MCF 10A (cell line): ENCODE measurements at regions of chr1 and their contacts with region 1.

Region 1: DNA sequence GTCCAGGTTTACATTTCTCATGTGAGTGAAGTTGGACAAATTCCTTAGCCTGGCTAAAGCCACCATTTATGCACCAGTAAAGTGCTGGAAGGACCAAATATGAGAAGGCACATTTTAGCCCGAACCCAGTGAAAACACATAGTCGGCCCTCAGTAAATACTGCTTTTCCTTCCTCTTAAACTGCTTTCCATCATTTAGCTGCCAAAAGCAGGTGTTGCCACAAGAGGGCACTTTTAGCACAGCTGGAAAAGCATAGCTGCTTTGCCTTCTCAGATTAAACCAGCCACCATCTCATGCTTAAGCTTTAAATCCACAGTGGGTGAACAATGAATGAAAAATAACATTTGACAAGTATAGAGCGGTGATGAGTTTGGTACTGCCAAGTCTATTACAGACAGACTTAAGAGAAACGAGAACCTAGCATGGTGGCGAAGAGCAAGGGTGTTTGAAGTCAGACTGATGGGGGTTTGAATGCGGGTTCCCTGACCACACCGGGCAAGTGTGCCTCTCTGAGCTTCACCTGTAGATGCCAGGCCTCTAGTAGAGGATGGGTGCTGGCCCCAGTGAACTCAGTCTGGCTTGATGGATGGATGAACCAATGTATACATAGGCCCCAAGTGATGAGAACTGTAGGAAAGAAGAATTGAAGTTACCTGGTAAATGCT is 57.8 kb downstream of the SLC35D1 start:
- DNase-seq: peak; percentile 73
- H3K4me3 Mint-ChIP-seq: no peak overlapping the region
- H3K27ac Mint-ChIP-seq: no peak overlapping the region
- H3K4me1 Mint-ChIP-seq: no peaks in the 10 kb centered on the region
- H3K27me3 Mint-ChIP-seq: no peaks in the 10 kb centered on the region
- CTCF ChIP-seq: peak; percentile 69

Region 2: DNA sequence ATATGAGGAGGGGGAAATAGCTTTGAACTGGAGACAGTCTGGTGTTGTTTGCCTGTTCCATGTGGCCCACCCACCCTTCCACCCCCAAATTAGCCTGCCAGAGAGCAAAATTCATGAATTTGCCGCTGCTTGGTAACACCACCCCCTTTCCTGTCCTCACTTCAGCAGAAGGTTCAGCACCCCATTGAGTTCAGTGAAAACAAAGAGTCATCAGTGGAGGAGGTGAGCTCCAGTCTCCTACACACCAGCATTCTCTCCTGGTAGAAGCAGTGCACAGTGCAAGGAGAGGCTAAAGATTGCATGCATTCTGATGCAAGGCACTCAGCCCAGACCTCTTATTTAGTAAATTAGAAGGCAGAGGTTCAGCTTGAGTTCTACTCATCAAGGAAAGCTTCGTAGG is 343.6 kb before region 1 on chr1:
- CTCF ChIA-PET with region 1: no interaction called
- POLR2A ChIA-PET with region 1: no interaction called
- intact Hi-C with region 1: no loop called
- DNase-seq: no peak
- H3K4me3 Mint-ChIP-seq: no peak overlapping the region
- H3K27ac Mint-ChIP-seq: no peak overlapping the region
- H3K4me1 Mint-ChIP-seq: no peaks in the 10 kb centered on the region
- H3K27me3 Mint-ChIP-seq: no peaks in the 10 kb centered on the region
- CTCF ChIP-seq: no peak

Region 3: GRCh38 chr1:66764994-66765578 is 231.1 kb before region 1 on chr1:
- CTCF ChIA-PET with region 1: interaction called, 7 read pairs
- POLR2A ChIA-PET with region 1: no interaction called
- intact Hi-C with region 1: loop called (anchors 1 kb)
- DNase-seq: peak; percentile 65
- H3K4me3 Mint-ChIP-seq: no peak overlapping the region
- H3K27ac Mint-ChIP-seq: no peak overlapping the region
- H3K4me1 Mint-ChIP-seq: no peaks in the 10 kb centered on the region
- H3K27me3 Mint-ChIP-seq: no peaks in the 10 kb centered on the region
- CTCF ChIP-seq: peak; percentile 78

Region 4: GRCh38 chr1:66985835-66986234 is 10.3 kb before region 1 on chr1:
- CTCF ChIA-PET with region 1: interaction called, 13 read pairs
- POLR2A ChIA-PET with region 1: interaction called, 3 read pairs
- intact Hi-C with region 1: no loop called
- DNase-seq: no peak
- H3K4me3 Mint-ChIP-seq: no peak overlapping the region
- H3K27ac Mint-ChIP-seq: no peak overlapping the region
- H3K4me1 Mint-ChIP-seq: no peaks in the 10 kb centered on the region
- H3K27me3 Mint-ChIP-seq: no peaks in the 10 kb centered on the region
- CTCF ChIP-seq: no peak

Region 5: GRCh38 chr1:67019600-67020136 is 23.5 kb after region 1 on chr1:
- CTCF ChIA-PET with region 1: interaction called, 10 read pairs
- POLR2A ChIA-PET with region 1: interaction called, 3 read pairs
- intact Hi-C with region 1: no loop called
- DNase-seq: no peak
- H3K4me3 Mint-ChIP-seq: no peak overlapping the region
- H3K27ac Mint-ChIP-seq: no peak overlapping the region
- H3K4me1 Mint-ChIP-seq: peaks cover 14% of the 10 kb centered on the region
- H3K27me3 Mint-ChIP-seq: no peaks in the 10 kb centered on the region
- CTCF ChIP-seq: no peak

Region 6: DNA sequence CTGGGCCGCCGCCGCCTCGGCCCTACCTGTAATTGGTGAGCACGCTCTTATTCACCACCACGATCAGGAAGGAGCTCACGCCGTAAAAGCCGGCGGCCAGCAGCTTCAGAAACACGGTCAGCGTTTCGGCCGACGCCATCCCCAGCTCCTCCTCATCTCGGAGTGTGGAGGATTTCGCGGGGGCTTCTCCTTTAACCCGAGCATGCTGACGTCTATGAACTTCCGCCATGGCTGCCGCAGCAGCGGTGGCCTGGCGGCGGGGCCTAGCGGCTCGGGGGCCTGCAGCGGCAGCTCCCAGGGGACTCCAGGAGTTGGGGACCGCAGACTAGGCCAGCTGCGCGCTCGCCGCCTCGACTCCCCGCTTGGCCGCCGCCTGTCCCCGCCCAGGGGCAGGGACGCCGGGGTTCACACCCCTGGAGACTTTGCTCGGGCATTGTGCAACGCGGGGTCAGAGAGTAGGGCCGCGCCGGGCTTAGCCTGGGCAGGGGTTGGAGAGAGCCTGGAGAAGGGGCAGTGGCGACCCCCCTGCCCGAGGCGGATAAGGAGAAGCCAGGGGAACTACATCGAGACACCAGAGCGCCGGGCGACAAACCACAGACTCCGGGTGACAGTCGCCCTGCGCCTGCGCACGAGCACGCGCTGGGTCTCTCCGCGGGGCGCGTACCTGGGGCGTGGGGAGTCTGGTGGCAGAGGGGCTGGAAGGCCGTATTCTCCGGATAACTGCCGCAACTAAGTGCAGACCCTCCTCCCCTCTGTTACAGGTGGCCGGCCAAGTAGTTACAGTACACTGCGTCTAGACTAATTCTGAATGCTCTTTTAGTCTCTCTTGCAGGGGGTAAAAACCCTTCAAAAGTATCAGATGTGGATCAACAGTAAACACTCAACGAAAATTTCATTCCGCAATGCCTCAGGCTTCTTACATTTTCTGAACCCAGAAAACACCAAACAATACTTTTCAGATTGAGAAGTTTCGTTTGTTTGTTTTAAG is 57.9 kb after region 1 on chr1 and contains the start of gene SLC35D1:
- CTCF ChIA-PET with region 1: interaction called, 14 read pairs
- POLR2A ChIA-PET with region 1: interaction called, 10 read pairs
- intact Hi-C with region 1: loop called (anchors 2 kb)
- DNase-seq: peak; percentile 69
- H3K4me3 Mint-ChIP-seq: peak within 1 kb of the TSS; percentile 93
- H3K27ac Mint-ChIP-seq: peak within 1 kb of the TSS; percentile 87
- H3K4me1 Mint-ChIP-seq: peaks cover 30% of the 10 kb centered on the region
- H3K27me3 Mint-ChIP-seq: no peaks in the 10 kb centered on the region
- CTCF ChIP-seq: no peak
- total RNA-seq, gene SLC35D1: 11.5 and 17.7 TPM in 2 replicates

Region 7: GRCh38 chr1:67126111-67126746 is 130.1 kb after region 1 on chr1:
- CTCF ChIA-PET with region 1: interaction called, 17 read pairs
- POLR2A ChIA-PET with region 1: no interaction called
- intact Hi-C with region 1: no loop called
- DNase-seq: peak; percentile 43
- H3K4me3 Mint-ChIP-seq: no peak overlapping the region
- H3K27ac Mint-ChIP-seq: peak overlapping the region; percentile 42
- H3K4me1 Mint-ChIP-seq: peaks cover 7% of the 10 kb centered on the region
- H3K27me3 Mint-ChIP-seq: no peaks in the 10 kb centered on the region
- CTCF ChIP-seq: no peak